ENCODE measurements at regions of chr10 and their contacts with region 1.

Region 1: GRCh38 chr10:96532496-96532895 is 18.8 kb upstream of the TLL2 start:
- DNase-seq: peak; percentile 33
- H3K4me3 ChIP-seq: no peak overlapping the region
- H3K27ac ChIP-seq: no peak overlapping the region
- H3K4me1 ChIP-seq: no peaks in the 10 kb centered on the region
- H3K27me3 ChIP-seq: no peaks in the 10 kb centered on the region
- CTCF ChIP-seq: no peak
- POLR2A ChIP-seq: no peak

Region 2: GRCh38 chr10:96548589-96548988 is 16.1 kb after region 1 on chr10:
- CTCF ChIA-PET with region 1: interaction called, 12 read pairs
- POLR2A ChIA-PET with region 1: no interaction called
- dilution Hi-C with region 1: no loop called
- intact Hi-C with region 1: no loop called
- DNase-seq: no peak
- H3K4me3 ChIP-seq: no peak overlapping the region
- H3K27ac ChIP-seq: no peak overlapping the region
- H3K4me1 ChIP-seq: no peaks in the 10 kb centered on the region
- H3K27me3 ChIP-seq: no peaks in the 10 kb centered on the region
- CTCF ChIP-seq: no peak
- POLR2A ChIP-seq: no peak

Measured in endothelial cell of umbilical vein (primary cell).